Activated CD4-positive, alpha-beta memory T cell treated with anti-CD3 and anti-CD28 coated beads, Interleukin-2, amount 10 ng/mL, durations not matched to agents 7 days and 5 days (primary cell): ENCODE measurements at regions of chr7 and their contacts with region 1.

Region 1: GRCh38 chr7:107150375-107151073 is 18.3 kb upstream of the HBP1 start:
- DNase-seq: peak; percentile 80
- H3K4me3 Mint-ChIP-seq: no peak overlapping the region
- H3K27ac Mint-ChIP-seq: no peak overlapping the region
- H3K4me1 Mint-ChIP-seq: peaks cover 2% of the 10 kb centered on the region
- H3K27me3 Mint-ChIP-seq: no peaks in the 10 kb centered on the region

Region 2: DNA sequence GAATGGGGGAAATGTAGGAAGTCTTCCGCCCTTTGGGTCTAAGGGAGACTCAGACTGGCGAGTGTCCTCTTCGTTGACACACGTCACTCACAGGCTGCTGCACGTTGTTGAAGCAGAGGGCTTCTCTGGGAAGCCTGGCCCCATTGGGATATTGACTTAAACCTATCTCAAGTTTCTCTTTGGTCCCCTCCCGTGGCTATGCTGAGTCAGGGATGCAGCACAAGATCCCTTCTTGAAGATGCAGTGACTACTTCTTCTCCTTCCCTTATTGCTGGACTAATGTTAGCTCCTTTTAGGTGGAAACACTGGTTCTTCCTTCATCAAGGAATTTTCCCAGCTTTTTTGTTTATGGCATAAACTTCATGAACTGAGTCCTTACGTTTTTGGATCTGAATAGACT is 399.8 kb before region 1 on chr7:
- CTCF ChIA-PET with region 1: no interaction called
- POLR2A ChIA-PET with region 1: no interaction called
- DNase-seq: no peak
- H3K4me3 Mint-ChIP-seq: no peak overlapping the region
- H3K27ac Mint-ChIP-seq: no peak overlapping the region
- H3K4me1 Mint-ChIP-seq: no peaks in the 10 kb centered on the region
- H3K27me3 Mint-ChIP-seq: peaks cover 4% of the 10 kb centered on the region

Region 3: GRCh38 chr7:106793015-106793975 is 357.2 kb before region 1 on chr7:
- CTCF ChIA-PET with region 1: interaction called, 18 read pairs
- POLR2A ChIA-PET with region 1: no interaction called
- DNase-seq: no peak
- H3K4me3 Mint-ChIP-seq: no peak overlapping the region
- H3K27ac Mint-ChIP-seq: no peak overlapping the region
- H3K4me1 Mint-ChIP-seq: no peaks in the 10 kb centered on the region
- H3K27me3 Mint-ChIP-seq: peaks cover 3% of the 10 kb centered on the region

Region 4: GRCh38 chr7:106947244-106947728 is 203.2 kb before region 1 on chr7:
- CTCF ChIA-PET with region 1: interaction called, 17 read pairs
- POLR2A ChIA-PET with region 1: no interaction called
- DNase-seq: peak; percentile 24
- H3K4me3 Mint-ChIP-seq: no peak overlapping the region
- H3K27ac Mint-ChIP-seq: no peak overlapping the region
- H3K4me1 Mint-ChIP-seq: no peaks in the 10 kb centered on the region
- H3K27me3 Mint-ChIP-seq: peaks cover 24% of the 10 kb centered on the region

Region 5: GRCh38 chr7:107108793-107109371 is 41.6 kb before region 1 on chr7:
- CTCF ChIA-PET with region 1: no interaction called
- POLR2A ChIA-PET with region 1: no interaction called
- DNase-seq: no peak
- H3K4me3 Mint-ChIP-seq: no peak overlapping the region
- H3K27ac Mint-ChIP-seq: no peak overlapping the region
- H3K4me1 Mint-ChIP-seq: no peaks in the 10 kb centered on the region
- H3K27me3 Mint-ChIP-seq: no peaks in the 10 kb centered on the region

Region 6: DNA sequence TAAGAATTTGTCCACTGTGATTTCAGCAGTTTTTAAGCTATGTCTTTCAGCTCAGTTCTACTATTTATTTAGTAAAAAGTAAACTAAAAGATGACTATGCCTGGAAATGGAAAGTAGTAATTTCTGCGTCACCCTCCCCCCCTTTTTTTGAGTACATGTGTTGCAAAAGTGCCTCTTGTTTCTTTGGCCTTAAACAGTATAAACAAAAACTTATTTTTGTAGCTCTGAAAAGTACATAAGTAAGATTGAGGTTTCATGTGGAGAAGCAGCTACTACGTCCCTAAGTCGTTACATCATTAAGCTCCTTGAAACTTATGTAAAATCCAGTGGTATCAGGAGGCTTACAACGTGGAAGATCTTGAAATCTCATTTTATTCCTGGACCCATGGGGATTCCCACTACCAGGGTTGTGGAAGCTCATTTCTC is 28.0 kb before region 1 on chr7:
- CTCF ChIA-PET with region 1: interaction called, 11 read pairs
- POLR2A ChIA-PET with region 1: no interaction called
- DNase-seq: no peak
- H3K4me3 Mint-ChIP-seq: no peak overlapping the region
- H3K27ac Mint-ChIP-seq: no peak overlapping the region
- H3K4me1 Mint-ChIP-seq: peaks cover 18% of the 10 kb centered on the region
- H3K27me3 Mint-ChIP-seq: no peaks in the 10 kb centered on the region

Region 7: GRCh38 chr7:107130487-107131225 is 19.9 kb before region 1 on chr7:
- CTCF ChIA-PET with region 1: interaction called, 17 read pairs
- POLR2A ChIA-PET with region 1: interaction called, 4 read pairs
- DNase-seq: no peak
- H3K4me3 Mint-ChIP-seq: no peak overlapping the region
- H3K27ac Mint-ChIP-seq: no peak overlapping the region
- H3K4me1 Mint-ChIP-seq: peaks cover 13% of the 10 kb centered on the region
- H3K27me3 Mint-ChIP-seq: peaks cover 8% of the 10 kb centered on the region